Heart right ventricle (tissue), 16 donors: ENCODE measurements at regions of chr11 and their contacts with region 1.

Region 1: DNA sequence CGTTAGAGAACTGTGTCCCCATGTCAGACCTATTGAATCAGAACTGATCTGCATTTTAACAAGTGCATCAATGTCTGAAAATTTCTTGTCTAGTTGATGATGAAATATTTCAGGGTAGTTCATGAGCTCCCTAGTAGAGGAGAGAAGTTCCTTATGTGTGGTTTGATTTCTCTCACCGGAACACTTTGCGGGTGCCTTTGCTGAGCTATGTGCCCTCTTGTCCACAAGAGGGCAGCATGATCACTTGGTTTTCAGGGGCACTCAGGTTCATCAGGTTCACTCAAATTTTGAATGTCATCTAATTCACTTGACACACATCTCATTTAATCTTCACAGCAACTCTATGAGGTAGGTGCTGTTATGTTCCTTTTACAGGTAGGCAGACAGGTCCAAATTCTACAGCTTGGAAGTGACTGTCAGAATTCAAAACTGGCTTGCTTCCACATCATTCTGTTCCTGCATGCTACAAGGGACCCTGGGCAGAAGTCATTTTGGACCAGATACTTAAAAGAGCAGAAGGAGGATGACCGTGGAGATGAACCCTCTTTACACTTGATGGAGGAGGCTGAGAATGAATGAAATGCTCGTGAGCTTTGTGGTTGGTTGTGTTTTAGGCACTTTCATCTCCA is 55.6 kb downstream of the P4HA3 start:
- DNase-seq: peak in 1 of 2 donors; percentile 47
- ATAC-seq: peak in 7 of 8 donors; percentile 40 to 70 (median 59)
- H3K4me3 ChIP-seq: no peak overlapping the region
- H3K27ac ChIP-seq: no peak overlapping the region
- H3K4me1 ChIP-seq: peaks cover 0 to 13% (median 0%) of the 10 kb centered on the region in 9 donors
- H3K27me3 ChIP-seq: no peaks in the 10 kb centered on the region
- CTCF ChIP-seq: peak; percentile 73 to 96 (median 92)

Region 2: DNA sequence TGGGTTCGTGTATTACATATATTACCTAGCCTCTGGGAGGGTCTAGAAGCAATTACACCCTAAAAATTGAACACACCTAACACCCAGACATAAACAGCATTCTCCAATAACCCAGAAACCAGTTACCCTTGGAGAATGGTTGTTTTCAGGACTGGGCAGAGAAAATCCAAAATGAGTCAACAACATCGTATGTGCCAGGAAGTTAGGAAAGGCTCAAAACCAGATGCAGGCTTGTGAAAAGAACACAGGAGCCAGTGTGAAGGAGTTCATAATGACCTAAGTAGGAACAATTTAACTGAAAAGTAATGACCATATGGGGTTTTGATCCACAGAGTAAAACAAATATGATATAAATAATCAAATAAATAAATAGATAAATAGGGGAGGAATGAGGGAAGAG is 1816.4 kb before region 1 on chr11:
- intact Hi-C with region 1: loop called in 1 of 10 experiments (anchors 5 kb)
- DNase-seq: no peak
- ATAC-seq: peak in 2 of 8 donors; percentile 13 to 30
- H3K4me3 ChIP-seq: no peak overlapping the region
- H3K27ac ChIP-seq: peak overlapping the region in 2 of 10 donors; percentile 26 to 66
- H3K4me1 ChIP-seq: peaks cover 0 to 44% (median 16%) of the 10 kb centered on the region in 9 donors
- H3K27me3 ChIP-seq: no peaks in the 10 kb centered on the region
- CTCF ChIP-seq: no peak

Region 3: DNA sequence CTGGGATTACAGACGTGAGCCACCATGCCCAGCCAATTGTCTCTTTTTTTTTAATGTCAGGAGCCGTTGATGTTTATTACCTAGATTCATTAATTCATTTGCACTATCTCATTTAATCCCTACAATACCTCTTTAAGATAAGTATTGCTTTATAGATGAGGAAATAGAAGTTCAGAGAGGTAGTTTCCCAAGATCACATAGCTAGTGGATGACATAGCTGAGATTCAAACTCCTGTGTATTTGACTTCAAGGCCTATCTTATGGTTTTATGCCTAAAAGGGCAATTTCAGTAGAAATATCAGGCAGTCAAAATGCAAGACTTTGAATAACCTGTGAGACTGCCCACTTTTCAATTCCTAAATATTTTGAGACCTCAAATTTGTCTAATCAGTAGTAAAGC is 18.3 kb before region 1 on chr11:
- intact Hi-C with region 1: no loop called
- DNase-seq: no peak
- ATAC-seq: no peak
- H3K4me3 ChIP-seq: no peak overlapping the region
- H3K27ac ChIP-seq: peak overlapping the region in 1 of 10 donors; percentile 3
- H3K4me1 ChIP-seq: peaks cover 0 to 12% (median 7%) of the 10 kb centered on the region in 9 donors
- H3K27me3 ChIP-seq: no peaks in the 10 kb centered on the region
- CTCF ChIP-seq: no peak

Region 4: GRCh38 chr11:74321487-74322188 is 65.8 kb after region 1 on chr11:
- intact Hi-C with region 1: loop called in 6 of 10 experiments (anchors 2 to 10 kb)
- DNase-seq: peak in 1 of 2 donors; percentile 29
- ATAC-seq: peak in 5 of 8 donors; percentile 21 to 44 (median 42)
- H3K4me3 ChIP-seq: no peak overlapping the region
- H3K27ac ChIP-seq: peak overlapping the region in 2 of 10 donors; percentile 19 to 48
- H3K4me1 ChIP-seq: peaks cover 9 to 49% (median 33%) of the 10 kb centered on the region in 9 donors
- H3K27me3 ChIP-seq: no peaks in the 10 kb centered on the region
- CTCF ChIP-seq: peak; percentile 11 to 65 (median 52)

Region 5: DNA sequence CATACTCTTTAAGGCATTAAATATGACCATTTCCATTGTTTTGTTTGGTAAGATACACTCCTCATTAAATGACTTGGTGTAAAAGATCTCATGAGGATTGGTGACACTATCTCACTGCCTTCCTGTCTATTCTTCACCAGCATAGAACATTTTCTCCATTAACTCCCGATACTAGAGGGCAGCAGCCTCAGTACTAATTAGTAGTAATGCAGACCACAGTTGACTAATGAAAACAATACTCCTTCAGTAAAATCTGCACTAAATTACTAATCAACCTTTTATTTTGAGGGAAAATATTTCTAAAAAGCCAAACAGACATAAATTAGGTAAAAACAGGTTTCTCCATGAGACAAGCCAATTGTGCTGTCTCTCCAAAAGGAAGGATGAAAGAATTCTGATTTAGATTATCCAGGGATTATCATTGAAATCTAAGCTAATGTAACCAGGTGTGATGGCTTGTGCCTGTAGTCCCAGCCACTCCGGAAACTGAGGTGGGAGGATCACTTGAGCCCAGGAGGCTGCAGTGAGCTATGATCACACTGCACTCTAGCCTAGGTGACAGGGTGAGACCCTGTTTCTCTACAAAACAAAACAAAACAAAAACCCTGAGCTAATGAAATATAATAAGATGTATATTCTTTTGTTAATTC is 132.9 kb after region 1 on chr11:
- intact Hi-C with region 1: loop called in 1 of 10 experiments (anchors 10 kb)
- DNase-seq: peak in 1 of 2 donors; percentile 72
- ATAC-seq: peak in 6 of 8 donors; percentile 67 to 81 (median 76)
- H3K4me3 ChIP-seq: no peak overlapping the region
- H3K27ac ChIP-seq: no peak overlapping the region
- H3K4me1 ChIP-seq: peaks cover 0 to 8% (median 0%) of the 10 kb centered on the region in 9 donors
- H3K27me3 ChIP-seq: no peaks in the 10 kb centered on the region
- CTCF ChIP-seq: peak; percentile 54 to 88 (median 76)

Region 6: GRCh38 chr11:74449369-74449931 is 193.6 kb after region 1 on chr11:
- intact Hi-C with region 1: loop called (anchors 1 to 5 kb)
- DNase-seq: peak in 1 of 2 donors; percentile 77
- ATAC-seq: peak; percentile 74 to 91 (median 86)
- H3K4me3 ChIP-seq: no peak overlapping the region
- H3K27ac ChIP-seq: peak overlapping the region in 1 of 10 donors; percentile 49
- H3K4me1 ChIP-seq: peaks cover 0 to 19% (median 0%) of the 10 kb centered on the region in 9 donors
- H3K27me3 ChIP-seq: no peaks in the 10 kb centered on the region
- CTCF ChIP-seq: peak; percentile 51 to 80 (median 75)

Region 7: GRCh38 chr11:74559110-74559933 is 303.5 kb after region 1 on chr11:
- intact Hi-C with region 1: loop called in 4 of 10 experiments (anchors 5 to 10 kb)
- DNase-seq: peak in 1 of 2 donors; percentile 40
- ATAC-seq: peak; percentile 45 to 92 (median 78)
- H3K4me3 ChIP-seq: no peak overlapping the region
- H3K27ac ChIP-seq: peak overlapping the region in 6 of 10 donors; percentile 3 to 62 (median 56)
- H3K4me1 ChIP-seq: peaks cover 0 to 16% (median 0%) of the 10 kb centered on the region in 9 donors
- H3K27me3 ChIP-seq: no peaks in the 10 kb centered on the region
- CTCF ChIP-seq: no peak

Region 8: DNA sequence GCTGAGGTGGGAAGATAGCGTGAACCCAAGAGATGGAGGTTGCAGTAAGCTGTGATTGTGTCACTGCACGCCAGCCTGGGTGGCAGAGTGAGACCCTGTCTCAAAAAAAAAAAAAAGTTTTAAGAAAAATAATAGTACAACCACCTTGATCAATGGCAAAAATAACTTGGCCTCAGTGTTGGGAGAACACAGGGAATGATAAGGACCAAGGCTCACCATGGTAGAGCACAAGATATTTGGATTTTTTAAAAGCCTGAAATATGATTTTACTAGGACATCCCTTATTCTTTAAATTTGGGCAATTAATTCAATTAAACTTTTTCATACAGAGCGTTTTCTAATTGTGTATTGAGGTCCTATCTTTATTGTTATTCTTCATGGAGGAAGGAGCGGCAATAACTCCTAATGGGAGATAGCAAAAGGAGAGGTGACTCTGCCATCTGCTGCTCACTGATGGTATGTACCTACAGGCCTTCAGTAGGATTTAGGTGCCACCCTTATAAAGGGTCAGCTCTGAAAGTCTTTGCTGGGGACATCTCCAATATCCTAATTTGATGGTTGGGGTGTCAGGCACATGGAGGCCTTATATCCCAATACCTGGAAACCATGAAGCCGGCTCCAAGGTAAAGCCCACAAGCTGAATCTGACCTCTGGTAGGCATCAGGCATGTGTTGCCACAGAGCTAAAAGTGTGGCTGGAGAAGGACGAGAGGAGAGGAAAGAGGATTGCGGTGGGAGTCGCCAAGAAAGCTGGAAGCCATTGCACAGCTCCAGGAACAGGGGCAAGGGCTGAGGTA is 314.6 kb after region 1 on chr11:
- intact Hi-C with region 1: loop called in 9 of 10 experiments (anchors 5 to 10 kb)
- DNase-seq: peak in 1 of 2 donors; percentile 34
- ATAC-seq: peak in 7 of 8 donors; percentile 74 to 86 (median 78)
- H3K4me3 ChIP-seq: no peak overlapping the region
- H3K27ac ChIP-seq: no peak overlapping the region
- H3K4me1 ChIP-seq: no peaks in the 10 kb centered on the region
- H3K27me3 ChIP-seq: peaks cover 0 to 7% (median 0%) of the 10 kb centered on the region in 7 donors
- CTCF ChIP-seq: peak; percentile 51 to 78 (median 76)